ENCODE measurements at regions of chr9 and their contacts with region 1.

Region 1: DNA sequence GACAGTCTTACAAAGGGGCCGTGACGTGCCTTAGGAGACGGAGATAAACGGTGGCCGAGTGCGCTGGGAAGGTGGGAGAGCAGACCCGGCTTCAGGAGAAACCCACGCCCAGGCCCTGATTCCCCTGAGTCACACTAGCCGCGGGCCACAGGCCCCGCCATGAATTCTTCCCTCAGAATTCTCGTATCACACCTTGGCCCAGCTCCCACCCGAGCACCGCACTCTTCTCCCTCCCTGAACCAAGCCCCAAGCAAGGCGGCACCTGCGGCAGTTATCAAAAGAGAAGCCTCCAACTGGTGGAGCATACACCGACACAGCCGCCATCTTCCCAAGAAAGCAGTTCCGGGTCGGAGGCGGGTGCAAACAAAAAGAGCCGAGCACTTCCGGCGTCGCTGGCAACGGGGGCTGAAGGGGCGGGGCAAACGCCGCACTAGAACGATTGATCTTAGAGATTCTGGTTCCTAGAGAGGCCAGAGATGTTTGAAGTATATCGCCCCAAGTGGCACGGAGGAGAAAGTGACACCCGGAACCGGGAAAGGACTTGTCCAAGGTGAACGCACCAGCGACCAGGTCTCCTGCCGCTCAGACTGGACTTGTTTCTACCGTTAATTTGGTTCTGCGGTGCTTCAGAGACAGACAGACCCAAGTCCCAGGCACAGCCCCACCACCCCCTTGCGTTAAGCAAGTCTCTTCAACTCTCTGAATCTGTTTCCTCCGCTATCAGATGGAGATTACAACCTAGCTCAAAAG is at the start of gene PSMB7:
- DNase-seq: peak; percentile 97
- ATAC-seq: peak; percentile 65
- H3K4me3 Mint-ChIP-seq: peak within 1 kb of the TSS; percentile 99
- H3K27ac Mint-ChIP-seq: peak within 1 kb of the TSS; percentile 98
- H3K4me1 Mint-ChIP-seq: peaks cover 10% of the 10 kb centered on the region
- H3K27me3 Mint-ChIP-seq: no peaks in the 10 kb centered on the region
- CTCF ChIP-seq: peak; percentile 47
- total RNA-seq, gene PSMB7: 160 to 187 TPM (median 164 TPM) in 3 replicates

Region 2: GRCh38 chr9:124267271-124267807 is 147.9 kb before region 1 on chr9:
- CTCF ChIA-PET with region 1: no interaction called
- POLR2A ChIA-PET with region 1: no interaction called
- DNase-seq: no peak
- ATAC-seq: no peak
- H3K4me3 Mint-ChIP-seq: no peak overlapping the region
- H3K27ac Mint-ChIP-seq: peak overlapping the region; percentile 57
- H3K4me1 Mint-ChIP-seq: peaks cover 14% of the 10 kb centered on the region
- H3K27me3 Mint-ChIP-seq: no peaks in the 10 kb centered on the region
- CTCF ChIP-seq: no peak

Region 3: DNA sequence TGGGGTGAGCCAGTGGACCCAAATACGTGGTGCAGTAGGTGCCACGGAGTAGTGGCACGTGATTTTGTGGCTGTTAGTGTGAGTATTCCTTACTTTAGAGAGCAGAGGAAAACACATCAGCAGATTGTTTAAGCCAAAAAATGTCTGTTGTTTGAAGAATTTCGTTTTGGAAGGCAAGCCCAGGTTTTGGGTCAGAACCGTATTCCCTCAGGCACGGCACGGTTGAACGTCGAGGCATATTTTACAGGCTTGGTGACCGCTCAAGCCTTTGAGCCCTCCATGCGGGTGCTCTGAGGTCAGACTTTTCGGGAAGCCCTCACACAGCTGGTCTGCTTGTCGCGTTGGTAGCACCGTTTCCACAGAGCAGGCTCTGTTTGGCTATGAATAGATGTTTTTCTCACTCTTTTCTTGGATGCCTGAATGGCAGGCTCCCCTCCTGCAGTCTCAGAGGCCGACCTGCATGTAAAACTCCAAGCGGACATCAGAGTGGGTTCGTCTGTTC is 130.3 kb before region 1 on chr9:
- CTCF ChIA-PET with region 1: no interaction called
- POLR2A ChIA-PET with region 1: no interaction called
- DNase-seq: no peak
- ATAC-seq: no peak
- H3K4me3 Mint-ChIP-seq: no peak overlapping the region
- H3K27ac Mint-ChIP-seq: no peak overlapping the region; the same call in 1 of the 2 replicates
- H3K4me1 Mint-ChIP-seq: peaks cover 2% of the 10 kb centered on the region; the same call in 1 of the 2 replicates
- H3K27me3 Mint-ChIP-seq: no peaks in the 10 kb centered on the region
- CTCF ChIP-seq: no peak

Region 4: GRCh38 chr9:124330011-124330697 is 85.1 kb before region 1 on chr9:
- CTCF ChIA-PET with region 1: no interaction called
- POLR2A ChIA-PET with region 1: no interaction called
- DNase-seq: no peak
- ATAC-seq: no peak
- H3K4me3 Mint-ChIP-seq: no peak overlapping the region
- H3K27ac Mint-ChIP-seq: no peak overlapping the region
- H3K4me1 Mint-ChIP-seq: no peaks in the 10 kb centered on the region
- H3K27me3 Mint-ChIP-seq: no peaks in the 10 kb centered on the region
- CTCF ChIP-seq: no peak

Region 5: GRCh38 chr9:124392871-124393460 is 22.3 kb before region 1 on chr9:
- CTCF ChIA-PET with region 1: interaction called, 12 read pairs
- POLR2A ChIA-PET with region 1: no interaction called
- DNase-seq: peak; percentile 30
- ATAC-seq: peak; percentile 81
- H3K4me3 Mint-ChIP-seq: no peak overlapping the region
- H3K27ac Mint-ChIP-seq: peak overlapping the region; percentile 73
- H3K4me1 Mint-ChIP-seq: peaks cover 41% of the 10 kb centered on the region
- H3K27me3 Mint-ChIP-seq: no peaks in the 10 kb centered on the region
- CTCF ChIP-seq: no peak

Region 6: DNA sequence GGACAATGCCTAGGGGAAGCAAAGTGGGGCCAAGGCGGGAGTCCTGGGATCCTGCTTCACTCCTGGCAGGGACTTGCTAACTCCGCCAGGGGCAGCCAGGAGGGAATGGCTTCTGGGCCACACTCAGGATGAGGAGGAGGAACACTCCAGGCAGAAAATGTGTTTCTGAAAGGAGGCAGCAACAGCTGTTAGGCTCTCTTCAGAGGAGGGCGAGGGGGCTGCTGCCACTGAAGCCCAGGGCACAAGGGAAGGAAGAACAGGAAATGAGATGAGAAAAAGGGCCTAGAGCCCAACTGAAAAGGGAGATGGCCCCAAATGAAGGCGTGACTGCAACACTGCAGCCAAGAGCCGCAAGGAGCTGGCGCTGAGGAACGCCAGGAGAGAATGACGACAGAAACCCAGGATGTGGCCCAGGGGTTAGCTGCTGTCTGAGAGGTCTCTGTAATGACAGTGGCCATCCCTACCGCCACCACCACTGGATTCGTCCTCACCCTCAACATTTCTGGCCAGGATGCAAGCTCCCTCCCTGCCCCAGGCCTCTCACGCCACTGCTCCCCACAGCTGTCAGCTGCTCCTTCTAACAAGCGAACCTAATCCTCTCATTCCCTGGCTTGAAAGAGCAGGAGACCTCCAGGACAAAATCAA is 15.8 kb before region 1 on chr9:
- CTCF ChIA-PET with region 1: interaction called, 17 read pairs
- POLR2A ChIA-PET with region 1: no interaction called
- DNase-seq: no peak
- ATAC-seq: peak; percentile 83
- H3K4me3 Mint-ChIP-seq: no peak overlapping the region
- H3K27ac Mint-ChIP-seq: peak overlapping the region; percentile 90
- H3K4me1 Mint-ChIP-seq: peaks cover 27% of the 10 kb centered on the region
- H3K27me3 Mint-ChIP-seq: no peaks in the 10 kb centered on the region
- CTCF ChIP-seq: no peak

Measured in WTC11 (cell line).